ENCODE measurements at regions of chr4 and their contacts with region 1.

Region 1: DNA sequence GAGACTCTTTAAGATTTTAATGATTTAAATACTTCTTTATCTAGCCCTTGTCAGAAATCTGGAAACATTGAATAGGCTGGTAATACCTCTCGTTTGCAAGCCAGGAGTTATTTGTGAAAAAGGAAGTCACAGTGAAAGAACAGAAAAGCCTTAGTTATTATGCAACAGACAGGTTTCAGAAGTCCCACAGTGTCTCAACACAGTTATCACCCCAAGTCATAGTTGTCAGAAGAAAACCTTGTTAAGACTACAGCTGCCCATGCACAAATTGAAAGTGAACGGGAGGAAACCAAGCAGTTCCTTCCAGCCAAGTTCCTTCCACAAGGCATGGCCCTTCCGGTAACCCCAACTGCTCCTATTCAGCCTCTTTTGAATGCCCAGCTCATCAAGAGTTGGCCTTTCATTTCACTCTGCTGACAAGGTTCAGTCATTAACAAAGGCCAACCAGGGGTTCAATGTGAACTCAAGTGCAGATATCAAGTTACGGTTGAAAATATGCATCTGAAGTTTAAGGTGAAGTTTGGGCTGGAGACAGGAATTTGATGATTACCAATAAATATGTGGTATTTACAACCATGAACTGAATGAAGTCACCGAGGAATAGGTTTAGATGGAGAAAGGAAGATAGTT is 15.6 kb downstream of the ALPK1 start:
- DNase-seq: no peak
- H3K4me3 ChIP-seq: no peak overlapping the region
- H3K27ac ChIP-seq: no peak overlapping the region
- H3K4me1 ChIP-seq: no peaks in the 10 kb centered on the region
- H3K27me3 ChIP-seq: no peaks in the 10 kb centered on the region
- CTCF ChIP-seq: no peak

Region 2: DNA sequence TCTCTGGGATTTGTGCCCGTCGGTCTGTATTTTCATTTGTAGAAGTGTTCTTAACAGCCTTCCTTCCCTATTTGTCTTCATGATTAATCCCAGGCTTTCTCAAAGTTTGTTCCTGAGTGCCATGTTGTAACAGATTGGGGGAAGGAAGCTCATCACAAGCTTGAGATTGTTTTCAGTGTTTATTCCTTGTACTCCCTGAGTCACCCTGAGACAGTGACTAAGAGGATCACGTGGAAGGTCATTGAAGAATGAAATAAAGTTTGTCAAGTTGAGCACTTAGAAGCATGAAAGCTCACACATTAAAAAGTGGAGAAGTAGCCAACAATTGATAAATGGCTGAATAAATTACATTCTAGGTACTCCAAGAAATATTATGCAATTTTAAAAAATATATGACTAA is 320.9 kb before region 1 on chr4:
- CTCF ChIA-PET with region 1: interaction called, 10 read pairs
- POLR2A ChIA-PET with region 1: no interaction called
- intact Hi-C with region 1: no loop called
- DNase-seq: no peak
- H3K4me3 ChIP-seq: no peak overlapping the region
- H3K27ac ChIP-seq: no peak overlapping the region
- H3K4me1 ChIP-seq: peaks cover 7% of the 10 kb centered on the region; the same call in 1 of the 2 replicates
- H3K27me3 ChIP-seq: peaks cover 5% of the 10 kb centered on the region; the same call in 1 of the 2 replicates
- CTCF ChIP-seq: no peak

Measured in PC-9 (cell line).